ENCODE measurements at regions of chr2 and their contacts with region 1.

Region 1: GRCh38 chr2:235685024-235685721 is 191.3 kb downstream of the AGAP1 start:
- DNase-seq: no peak
- H3K4me3 ChIP-seq: no peak overlapping the region
- H3K27ac ChIP-seq: no peak overlapping the region
- H3K4me1 ChIP-seq: no peaks in the 10 kb centered on the region
- H3K27me3 ChIP-seq: no peaks in the 10 kb centered on the region
- CTCF ChIP-seq: no peak

Region 2: DNA sequence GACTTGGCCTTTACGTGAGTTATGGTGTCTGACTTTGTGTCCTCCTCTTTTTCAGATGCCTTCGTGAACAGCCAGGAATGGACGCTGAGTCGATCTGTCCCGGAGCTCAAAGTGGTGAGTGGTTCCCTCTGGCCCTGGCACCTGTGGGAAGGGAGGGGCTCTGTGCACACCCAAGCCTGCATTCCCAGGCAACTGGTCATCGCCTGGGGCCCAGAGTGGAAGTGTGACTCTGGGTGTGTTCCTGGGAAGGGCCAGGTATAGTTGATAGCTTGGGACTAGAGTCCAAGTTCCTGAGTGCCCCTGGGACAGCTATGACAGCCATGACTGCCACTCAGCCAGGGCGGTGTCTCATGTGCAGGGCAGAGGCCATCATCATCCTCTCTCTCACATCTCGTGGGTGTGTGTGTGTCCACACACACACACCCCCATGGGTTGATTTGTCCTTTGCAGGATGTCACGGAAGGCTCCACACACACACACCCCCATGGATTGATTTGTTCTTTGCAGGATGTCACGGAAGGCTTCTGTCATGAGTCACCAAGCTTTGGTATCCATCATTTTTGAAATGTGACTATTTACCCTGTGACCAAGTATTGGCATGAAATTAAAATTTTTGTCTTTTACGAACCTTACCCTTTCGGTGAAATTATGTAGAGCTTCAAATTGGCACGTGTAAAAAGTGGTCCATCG is 24.1 kb after region 1 on chr2:
- CTCF ChIA-PET with region 1: interaction called, 12 read pairs
- dilution Hi-C with region 1: no loop called
- in situ Hi-C with region 1: no loop called
- intact Hi-C with region 1: no loop called
- DNase-seq: peak; percentile 89
- H3K4me3 ChIP-seq: no peak overlapping the region
- H3K27ac ChIP-seq: peak overlapping the region; percentile 85
- H3K4me1 ChIP-seq: peaks cover 29% of the 10 kb centered on the region
- H3K27me3 ChIP-seq: no peaks in the 10 kb centered on the region
- CTCF ChIP-seq: no peak